ENCODE measurements at regions of chr1 and their contacts with region 1.

Region 1: DNA sequence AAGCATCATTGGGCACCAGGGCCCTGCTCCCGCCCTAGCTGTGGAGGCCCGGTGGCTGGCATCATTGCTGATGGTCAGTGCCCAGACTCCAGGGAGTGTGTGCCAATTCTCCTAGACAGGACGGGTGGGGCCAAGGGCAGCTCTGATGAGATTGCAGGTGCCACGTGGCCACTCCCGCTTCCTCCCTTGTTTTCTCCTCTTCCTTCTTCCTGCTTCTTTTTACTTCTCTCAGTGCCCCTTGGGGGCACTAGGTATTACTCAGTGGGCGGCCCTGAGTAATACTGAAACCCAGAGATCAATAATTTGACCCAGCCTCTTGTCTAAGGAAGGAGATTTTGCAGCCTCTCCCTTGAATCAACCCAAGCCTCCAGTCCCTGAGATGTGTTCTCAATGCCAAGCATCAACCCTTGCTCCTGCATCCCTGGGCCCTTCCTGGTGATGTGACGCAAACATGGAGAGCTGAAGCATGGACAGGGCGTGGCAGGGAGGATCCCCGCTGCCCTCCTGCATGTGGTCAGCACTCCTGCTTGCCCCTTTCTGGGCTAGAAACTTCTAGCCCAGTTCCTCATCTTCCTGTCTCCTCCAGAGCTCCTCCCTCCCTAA is 32.4 kb downstream of the CDK18 start:
- DNase-seq: no peak
- ATAC-seq: peak; percentile 25 to 80 (median 65)
- H3K4me3 ChIP-seq: no peak overlapping the region
- H3K27ac ChIP-seq: peak overlapping the region in 2 of 10 donors; percentile 35 to 38
- H3K4me1 ChIP-seq: peaks cover 0 to 34% (median 12%) of the 10 kb centered on the region in 9 donors
- H3K27me3 ChIP-seq: peaks cover 0 to 8% (median 0%) of the 10 kb centered on the region in 7 donors
- CTCF ChIP-seq: no peak

Region 2: DNA sequence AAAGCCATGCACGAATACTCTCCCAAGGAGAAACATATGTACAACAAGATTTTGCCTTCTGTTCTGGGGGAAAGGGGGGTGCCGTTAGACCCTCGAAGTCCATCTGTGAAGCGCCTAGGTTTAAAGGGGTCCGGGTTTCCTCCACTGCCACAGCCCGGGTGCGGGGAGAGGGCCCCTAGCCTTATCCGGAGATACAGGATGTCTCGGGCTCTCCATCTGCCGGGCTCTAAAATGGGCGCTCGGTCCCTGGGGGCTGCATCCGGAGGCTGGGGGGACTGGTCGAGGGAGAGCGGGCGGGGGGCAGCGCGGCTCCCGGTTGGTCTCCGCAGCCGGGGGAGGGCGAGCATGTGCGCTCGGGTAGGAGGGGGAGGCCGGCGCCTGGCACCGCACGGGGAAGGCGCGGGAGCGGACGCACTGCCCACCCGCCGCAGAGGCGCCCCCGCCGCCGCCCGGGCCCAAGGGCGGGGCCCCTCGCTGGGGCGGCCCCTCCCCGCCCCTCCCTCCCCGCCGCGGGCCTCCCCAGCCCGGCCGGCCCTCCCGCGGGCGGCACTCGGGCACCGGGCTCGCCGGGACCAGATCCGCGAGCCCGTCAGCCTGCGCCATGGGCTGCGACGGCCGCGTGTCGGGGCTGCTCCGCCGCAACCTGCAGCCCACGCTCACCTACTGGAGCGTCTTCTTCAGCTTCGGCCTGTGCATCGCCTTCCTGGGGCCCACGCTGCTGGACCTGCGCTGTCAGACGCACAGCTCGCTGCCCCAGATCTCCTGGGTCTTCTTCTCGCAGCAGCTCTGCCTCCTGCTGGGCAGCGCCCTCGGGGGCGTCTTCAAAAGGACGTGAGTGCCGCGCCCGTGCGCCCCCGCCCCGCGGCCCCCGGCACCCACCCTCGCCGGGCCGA is 31.9 kb after region 1 on chr1:
- intact Hi-C with region 1: loop called in 3 of 10 experiments (anchors 5 kb)
- DNase-seq: no peak
- ATAC-seq: peak in 4 of 8 donors; percentile 27 to 63 (median 48)
- H3K4me3 ChIP-seq: peak overlapping the region in 9 of 10 donors; percentile 33 to 60 (median 49)
- H3K27ac ChIP-seq: peak overlapping the region in 1 of 10 donors; percentile 12
- H3K4me1 ChIP-seq: peaks cover 0 to 11% (median 3%) of the 10 kb centered on the region in 9 donors
- H3K27me3 ChIP-seq: peaks cover 0 to 73% (median 27%) of the 10 kb centered on the region in 7 donors
- CTCF ChIP-seq: peak in 5 of 9 donors; percentile 22 to 47 (median 33)

Region 3: DNA sequence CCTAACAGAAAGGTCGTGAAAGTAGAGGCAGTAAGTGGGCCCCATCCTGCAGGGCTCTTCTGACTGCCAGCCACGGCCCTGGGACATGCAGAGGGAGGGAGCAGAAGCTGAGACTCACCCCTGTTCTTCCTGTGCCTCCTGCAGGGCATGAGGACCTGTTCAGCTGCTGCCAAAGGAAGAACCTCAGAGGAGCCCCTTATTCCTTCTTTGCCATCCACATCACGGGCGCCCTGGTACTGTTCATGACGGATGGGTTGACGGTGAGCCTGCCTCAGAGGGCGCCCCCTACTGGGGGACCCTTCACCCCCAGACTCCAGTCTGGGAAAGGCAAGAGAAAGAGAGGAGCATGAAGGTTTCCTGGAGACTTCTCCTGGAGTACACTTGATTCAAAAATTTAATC is 47.9 kb after region 1 on chr1:
- intact Hi-C with region 1: loop called in 4 of 10 experiments (anchors 5 to 10 kb)
- DNase-seq: no peak
- ATAC-seq: no peak
- H3K4me3 ChIP-seq: no peak overlapping the region
- H3K27ac ChIP-seq: no peak overlapping the region
- H3K4me1 ChIP-seq: peaks cover 0 to 30% (median 11%) of the 10 kb centered on the region in 9 donors
- H3K27me3 ChIP-seq: peaks cover 0 to 9% (median 0%) of the 10 kb centered on the region in 7 donors
- CTCF ChIP-seq: peak in 6 of 9 donors; percentile 19 to 43 (median 34)

Region 4: DNA sequence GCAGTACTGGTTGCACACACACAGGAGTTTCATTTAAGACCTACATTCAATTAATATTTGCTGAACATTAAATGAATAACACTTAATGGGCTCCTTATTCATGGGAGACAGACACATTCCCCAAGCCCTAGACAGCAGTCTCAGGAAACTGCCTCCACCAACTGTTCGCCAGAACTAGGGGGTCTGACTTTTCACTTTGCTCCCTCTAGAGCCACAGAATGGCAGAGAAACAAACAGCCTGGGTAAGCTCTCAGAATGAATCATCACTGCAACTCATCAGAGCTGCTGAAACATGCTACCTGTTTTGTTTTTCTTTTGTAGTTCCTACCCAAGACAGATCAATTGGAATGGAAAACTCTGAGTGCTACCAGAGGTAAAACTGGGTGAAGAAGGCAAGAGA is 63.2 kb after region 1 on chr1:
- intact Hi-C with region 1: no loop called
- DNase-seq: no peak
- ATAC-seq: no peak
- H3K4me3 ChIP-seq: peak overlapping the region in 1 of 10 donors; percentile 16
- H3K27ac ChIP-seq: peak overlapping the region in 9 of 10 donors; percentile 20 to 83 (median 71)
- H3K4me1 ChIP-seq: peaks cover 8 to 43% (median 35%) of the 10 kb centered on the region in 9 donors
- H3K27me3 ChIP-seq: no peaks in the 10 kb centered on the region
- CTCF ChIP-seq: no peak

Measured in heart right ventricle (tissue), 16 donors.